Activated B cell treated with CpG ODN at 0.5 μM for 24 hours (primary cell): ENCODE measurements at regions of chr4 and their contacts with region 1.

Region 1: DNA sequence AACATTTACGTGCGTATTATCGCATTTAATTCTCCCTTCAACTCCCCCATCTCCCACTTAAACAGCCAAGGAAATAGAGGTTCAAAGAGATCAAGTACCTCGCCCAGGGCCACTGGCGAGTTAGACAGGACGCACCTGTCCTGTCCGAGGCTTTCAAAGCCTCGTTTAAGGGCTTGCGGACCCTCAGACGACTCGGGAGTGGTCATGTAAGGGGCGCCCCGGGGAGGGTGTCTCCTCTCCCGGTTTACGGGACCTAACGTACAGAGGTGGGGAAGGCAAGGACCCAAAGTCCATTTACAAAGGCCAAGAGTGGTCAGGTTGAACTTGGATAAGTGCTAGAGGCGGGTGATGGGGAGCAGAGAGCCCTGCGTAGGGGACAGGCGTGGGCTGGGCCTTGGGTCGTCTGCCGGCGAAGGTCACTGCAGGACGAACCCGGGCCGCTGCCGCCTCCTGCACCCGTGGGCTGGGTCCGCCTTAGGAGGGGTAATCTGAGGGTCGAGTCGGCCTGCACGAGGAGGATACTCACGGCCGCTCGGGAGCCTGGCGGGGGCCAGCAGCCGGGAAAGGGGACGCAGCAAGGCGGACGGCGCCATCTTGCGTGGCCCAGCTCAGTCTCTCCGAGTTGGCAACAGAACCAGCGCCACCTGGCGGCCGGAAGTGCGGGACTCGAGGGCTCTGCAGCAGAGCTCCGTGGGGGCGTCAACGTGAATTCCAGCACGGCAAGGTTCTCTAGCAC is 5.9 kb upstream of the NAA15 start:
- DNase-seq: peak; percentile 98
- ATAC-seq: peak; percentile 93
- H3K4me3 Mint-ChIP-seq: peak overlapping the region; percentile 97
- H3K27ac Mint-ChIP-seq: peak overlapping the region; percentile 98
- H3K4me1 Mint-ChIP-seq: peaks cover 15% of the 10 kb centered on the region
- H3K27me3 Mint-ChIP-seq: no peaks in the 10 kb centered on the region
- CTCF ChIP-seq: peak; percentile 90

Region 2: DNA sequence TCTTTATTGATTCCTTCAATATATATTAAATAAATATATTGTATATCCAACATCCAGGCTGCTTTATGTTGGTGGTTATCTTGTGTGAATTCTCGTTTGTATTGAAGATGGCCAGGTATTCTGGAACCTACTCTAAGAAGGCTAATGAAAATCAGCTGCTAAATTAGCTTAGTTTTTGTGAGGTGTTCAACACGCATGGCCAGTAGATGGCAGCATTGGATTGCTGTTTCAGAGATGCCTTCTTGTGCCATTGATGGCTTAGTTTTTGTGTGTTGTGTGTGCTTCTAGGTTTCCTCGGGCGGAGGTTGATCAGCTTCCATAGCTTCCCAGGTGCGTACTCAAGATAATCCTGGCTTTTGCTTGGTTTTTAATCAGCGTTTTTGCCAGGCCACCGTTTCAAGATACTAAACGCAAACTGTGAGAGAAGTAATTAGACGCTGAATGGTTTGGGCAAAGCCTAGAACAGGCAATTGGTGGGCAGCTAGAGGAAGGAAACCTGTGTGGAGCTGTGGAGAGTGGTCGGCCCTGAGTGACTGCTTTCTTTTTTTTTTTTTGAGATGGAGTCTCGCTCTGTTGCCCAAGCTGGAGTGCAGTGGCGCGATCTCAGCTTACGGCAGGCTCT is 264.6 kb before region 1 on chr4:
- CTCF ChIA-PET with region 1: interaction called, 33 read pairs
- POLR2A ChIA-PET with region 1: interaction called, 3 read pairs
- intact Hi-C with region 1: loop called (anchors 1 kb)
- DNase-seq: peak; percentile 34
- ATAC-seq: peak; percentile 75
- H3K4me3 Mint-ChIP-seq: peak overlapping the region; percentile 0
- H3K27ac Mint-ChIP-seq: no peak overlapping the region
- H3K4me1 Mint-ChIP-seq: peaks cover 32% of the 10 kb centered on the region
- H3K27me3 Mint-ChIP-seq: no peaks in the 10 kb centered on the region
- CTCF ChIP-seq: peak; percentile 60

Region 3: GRCh38 chr4:139099366-139099982 is 195.9 kb before region 1 on chr4:
- CTCF ChIA-PET with region 1: interaction called, 54 read pairs
- POLR2A ChIA-PET with region 1: interaction called, 10 read pairs
- intact Hi-C with region 1: loop called (anchors 1 kb)
- DNase-seq: peak; percentile 28
- ATAC-seq: peak; percentile 90
- H3K4me3 Mint-ChIP-seq: no peak overlapping the region
- H3K27ac Mint-ChIP-seq: no peak overlapping the region
- H3K4me1 Mint-ChIP-seq: no peaks in the 10 kb centered on the region
- H3K27me3 Mint-ChIP-seq: no peaks in the 10 kb centered on the region
- CTCF ChIP-seq: no peak

Region 4: DNA sequence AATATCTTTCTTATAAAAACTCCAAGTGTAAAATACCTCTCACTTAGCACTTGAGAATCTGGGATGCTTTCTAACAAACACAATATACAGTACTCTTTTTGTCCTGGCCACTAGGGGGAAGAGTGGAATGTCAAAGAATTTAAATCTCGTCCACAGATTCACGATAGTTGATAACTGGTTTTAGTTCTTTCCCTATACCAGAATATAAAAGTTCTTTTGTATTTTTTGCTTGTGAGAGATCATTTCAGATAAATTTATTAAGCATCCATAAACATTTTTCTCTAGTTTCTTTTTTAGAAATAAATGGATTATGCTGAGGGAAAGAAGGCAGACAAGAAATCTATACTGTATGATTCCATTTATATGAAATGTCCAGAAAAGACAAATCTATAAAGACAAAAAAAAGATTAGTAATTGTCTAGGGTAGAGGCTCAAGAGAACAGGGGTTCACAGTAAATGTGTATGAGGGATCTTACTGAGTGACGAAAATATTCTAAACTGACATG is 65.8 kb before region 1 on chr4:
- CTCF ChIA-PET with region 1: interaction called, 20 read pairs
- POLR2A ChIA-PET with region 1: interaction called, 6 read pairs
- intact Hi-C with region 1: loop called (anchors 1 kb)
- DNase-seq: no peak
- ATAC-seq: peak; percentile 61
- H3K4me3 Mint-ChIP-seq: no peak overlapping the region
- H3K27ac Mint-ChIP-seq: no peak overlapping the region
- H3K4me1 Mint-ChIP-seq: peaks cover 3% of the 10 kb centered on the region
- H3K27me3 Mint-ChIP-seq: no peaks in the 10 kb centered on the region
- CTCF ChIP-seq: no peak

Region 5: GRCh38 chr4:139279760-139280620 is 15.4 kb before region 1 on chr4 and contains the start of gene MGARP:
- CTCF ChIA-PET with region 1: interaction called, 8 read pairs
- POLR2A ChIA-PET with region 1: interaction called, 8 read pairs
- intact Hi-C with region 1: loop called (anchors 1 kb)
- DNase-seq: peak; percentile 36
- ATAC-seq: peak; percentile 68
- H3K4me3 Mint-ChIP-seq: peak within 1 kb of the TSS; percentile 79
- H3K27ac Mint-ChIP-seq: no peak within 1 kb of the TSS
- H3K4me1 Mint-ChIP-seq: peaks cover 20% of the 10 kb centered on the region
- H3K27me3 Mint-ChIP-seq: peaks cover 32% of the 10 kb centered on the region
- CTCF ChIP-seq: no peak
- total RNA-seq, gene MGARP: not detected in 2 replicates